ENCODE measurements at regions of chr1 and their contacts with region 1.

Region 1: GRCh38 chr1:61043010-61043820 is 39.1 kb upstream of the NFIA start:
- DNase-seq: peak; percentile 89 to 95 (median 90)
- ATAC-seq: peak; percentile 87 to 97 (median 96)
- H3K4me3 ChIP-seq: peak overlapping the region; percentile 28 to 67 (median 59)
- H3K27ac ChIP-seq: peak overlapping the region in 10 of 12 donors; percentile 22 to 82 (median 72)
- H3K4me1 ChIP-seq: peaks cover 0 to 11% (median 4%) of the 10 kb centered on the region in 12 donors
- H3K27me3 ChIP-seq: no peaks in the 10 kb centered on the region
- CTCF ChIP-seq: peak; percentile 86 to 94 (median 92)
- POLR2A ChIP-seq: no peak

Region 2: DNA sequence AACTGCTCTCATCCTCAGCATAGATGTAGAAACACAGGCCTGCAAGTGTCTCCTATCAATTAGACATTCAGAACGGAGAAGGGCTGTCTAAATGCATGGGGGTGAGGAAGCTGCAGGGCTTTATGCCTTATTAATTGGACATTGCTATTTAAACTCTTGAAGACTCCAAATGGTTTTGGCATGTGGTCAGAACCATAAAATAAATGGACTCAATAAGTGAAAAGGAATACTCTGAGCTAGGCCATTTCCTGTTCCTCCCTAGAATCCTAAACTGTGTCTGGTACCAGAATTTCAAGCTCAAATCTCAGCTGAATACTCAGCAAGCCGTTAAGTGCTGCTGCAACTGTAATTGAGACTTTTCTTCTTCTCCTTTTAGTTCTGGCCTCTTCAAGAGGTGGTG is 889.3 kb before region 1 on chr1:
- intact Hi-C with region 1: loop called in 2 of 10 experiments (anchors 5 to 10 kb)
- DNase-seq: no peak
- ATAC-seq: no peak
- H3K4me3 ChIP-seq: no peak overlapping the region
- H3K27ac ChIP-seq: no peak overlapping the region
- H3K4me1 ChIP-seq: no peaks in the 10 kb centered on the region
- H3K27me3 ChIP-seq: no peaks in the 10 kb centered on the region
- CTCF ChIP-seq: no peak
- POLR2A ChIP-seq: no peak

Region 3: GRCh38 chr1:60848583-60849188 is 194.5 kb before region 1 on chr1:
- intact Hi-C with region 1: loop called (anchors 1 to 10 kb)
- DNase-seq: no peak
- ATAC-seq: no peak
- H3K4me3 ChIP-seq: no peak overlapping the region
- H3K27ac ChIP-seq: no peak overlapping the region
- H3K4me1 ChIP-seq: peaks cover 0 to under 1% (median 0%) of the 10 kb centered on the region in 12 donors
- H3K27me3 ChIP-seq: no peaks in the 10 kb centered on the region
- CTCF ChIP-seq: peak; percentile 29 to 62 (median 52)
- POLR2A ChIP-seq: no peak

Region 4: GRCh38 chr1:60969971-60970509 is 73.2 kb before region 1 on chr1:
- intact Hi-C with region 1: loop called (anchors 1 to 10 kb)
- DNase-seq: no peak
- ATAC-seq: peak; percentile 48 to 78 (median 60)
- H3K4me3 ChIP-seq: peak overlapping the region in 4 of 12 donors; percentile 2 to 25 (median 10)
- H3K27ac ChIP-seq: peak overlapping the region in 8 of 12 donors; percentile 31 to 79 (median 62)
- H3K4me1 ChIP-seq: peaks cover 0 to 15% (median 2%) of the 10 kb centered on the region in 12 donors
- H3K27me3 ChIP-seq: no peaks in the 10 kb centered on the region
- CTCF ChIP-seq: peak in 11 of 12 donors; percentile 32 to 69 (median 56)
- POLR2A ChIP-seq: no peak

Measured in heart left ventricle (tissue), 16 donors.